Activated CD4-positive, alpha-beta T cell treated with anti-CD3 and anti-CD28 coated beads for 36 hours (primary cell): ENCODE measurements at regions of chr2 and their contacts with region 1.

Region 1: DNA sequence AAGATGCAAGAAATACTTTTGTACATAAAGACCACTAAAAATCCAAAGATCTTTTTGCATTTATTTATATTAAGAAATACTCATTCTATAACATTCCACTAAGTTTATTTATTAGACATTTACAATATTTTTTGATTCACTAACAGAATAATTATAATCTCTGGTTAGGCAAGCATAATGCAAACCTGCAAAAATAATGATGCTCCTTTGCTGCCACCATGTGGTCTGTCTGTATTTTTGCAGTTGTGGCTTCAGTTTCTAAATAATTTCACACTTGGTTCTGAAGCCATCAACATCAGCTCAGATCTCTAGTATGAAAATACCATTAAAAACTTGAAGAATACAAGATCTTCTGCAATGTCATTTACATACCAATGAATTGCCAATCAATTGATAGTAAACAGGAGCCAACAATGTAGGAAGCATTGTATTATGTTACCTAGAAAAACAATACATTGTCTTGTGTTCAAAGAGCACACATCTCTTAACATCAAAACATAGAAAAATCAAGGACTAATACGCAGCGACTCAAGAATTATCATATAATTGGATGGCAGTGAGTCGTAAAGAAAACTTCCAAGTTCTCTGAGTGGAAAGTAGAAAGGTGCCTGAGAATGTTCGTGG is 28.8 kb upstream of the WDR75 start:
- DNase-seq: peak; percentile 63
- ATAC-seq: no peak
- H3K4me3 Mint-ChIP-seq: no peak overlapping the region
- H3K27ac Mint-ChIP-seq: no peak overlapping the region
- H3K4me1 Mint-ChIP-seq: peaks cover 14% of the 10 kb centered on the region
- H3K27me3 Mint-ChIP-seq: no peaks in the 10 kb centered on the region

Region 2: DNA sequence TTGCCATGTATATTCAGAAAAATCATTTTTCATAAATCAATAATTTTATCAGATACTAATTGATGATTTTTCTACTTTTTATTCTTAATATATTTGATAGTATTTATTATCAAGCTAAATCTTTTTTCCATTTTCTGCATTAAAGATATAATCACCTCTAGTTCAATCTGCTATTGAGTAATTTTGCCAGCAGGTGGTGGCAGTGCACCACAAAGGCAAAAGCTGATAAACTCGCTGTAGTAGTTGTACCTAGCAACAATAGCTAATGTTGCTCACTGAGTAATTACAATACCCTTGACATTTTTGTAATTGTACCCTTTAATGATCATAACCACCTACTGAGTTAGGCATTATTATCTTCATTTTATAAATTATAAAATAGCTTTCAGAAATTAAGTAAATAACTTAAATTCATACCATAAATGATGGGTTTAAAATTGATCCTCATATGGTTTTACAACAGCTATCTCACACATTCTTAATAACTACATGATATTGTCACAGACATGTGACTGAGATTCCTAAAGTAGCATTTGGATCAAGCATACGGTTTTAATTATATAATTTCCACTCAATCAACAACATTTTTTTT is 1912.4 kb before region 1 on chr2:
- CTCF ChIA-PET with region 1: no interaction called
- POLR2A ChIA-PET with region 1: no interaction called
- intact Hi-C with region 1: loop called in 1 of 2 experiments (anchors 10 kb)
- DNase-seq: peak; percentile 73
- ATAC-seq: peak; percentile 44
- H3K4me3 Mint-ChIP-seq: no peak overlapping the region
- H3K27ac Mint-ChIP-seq: no peak overlapping the region
- H3K4me1 Mint-ChIP-seq: peaks cover 6% of the 10 kb centered on the region
- H3K27me3 Mint-ChIP-seq: peaks cover 2% of the 10 kb centered on the region

Region 3: GRCh38 chr2:188524519-188525113 is 887.8 kb before region 1 on chr2:
- CTCF ChIA-PET with region 1: interaction called, 20 read pairs
- POLR2A ChIA-PET with region 1: no interaction called
- intact Hi-C with region 1: loop called (anchors 1 kb)
- DNase-seq: peak; percentile 28
- ATAC-seq: no peak
- H3K4me3 Mint-ChIP-seq: no peak overlapping the region
- H3K27ac Mint-ChIP-seq: no peak overlapping the region
- H3K4me1 Mint-ChIP-seq: no peaks in the 10 kb centered on the region
- H3K27me3 Mint-ChIP-seq: peaks cover 3% of the 10 kb centered on the region

Region 4: DNA sequence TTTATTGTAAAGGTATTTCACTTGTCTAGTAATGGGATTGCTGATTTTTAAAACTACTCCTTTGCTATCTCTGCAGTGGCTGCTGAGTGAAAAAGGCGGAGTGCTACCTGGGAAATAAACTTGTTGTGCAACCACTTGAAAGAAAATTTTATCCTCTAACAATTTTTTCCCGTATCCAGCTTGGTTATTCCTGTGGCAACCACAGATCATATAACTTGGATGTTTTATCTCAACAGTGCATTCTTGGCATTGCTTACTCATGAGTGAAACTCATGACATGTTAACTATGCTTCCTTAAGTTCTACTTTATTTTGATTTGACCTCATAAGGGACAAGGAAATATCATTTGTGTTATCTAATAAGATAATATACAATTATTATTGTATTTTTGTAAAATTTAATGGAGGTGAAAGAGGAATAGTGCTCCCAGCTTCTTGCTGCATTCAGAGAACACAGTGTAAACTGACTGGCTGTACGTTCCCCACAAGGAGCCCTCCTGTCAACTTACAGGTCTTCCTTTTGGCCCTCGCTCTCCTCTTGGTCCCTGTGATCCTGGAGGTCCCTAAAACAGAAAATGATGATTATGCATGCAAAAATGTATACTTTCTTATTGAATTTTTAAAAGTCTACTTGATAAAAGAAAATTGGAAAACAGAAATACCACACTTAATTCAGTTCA is 315.5 kb before region 1 on chr2:
- CTCF ChIA-PET with region 1: interaction called, 51 read pairs
- POLR2A ChIA-PET with region 1: no interaction called
- intact Hi-C with region 1: loop called (anchors 1 kb)
- DNase-seq: no peak
- ATAC-seq: no peak
- H3K4me3 Mint-ChIP-seq: no peak overlapping the region
- H3K27ac Mint-ChIP-seq: no peak overlapping the region
- H3K4me1 Mint-ChIP-seq: no peaks in the 10 kb centered on the region
- H3K27me3 Mint-ChIP-seq: peaks cover 2% of the 10 kb centered on the region

Region 5: DNA sequence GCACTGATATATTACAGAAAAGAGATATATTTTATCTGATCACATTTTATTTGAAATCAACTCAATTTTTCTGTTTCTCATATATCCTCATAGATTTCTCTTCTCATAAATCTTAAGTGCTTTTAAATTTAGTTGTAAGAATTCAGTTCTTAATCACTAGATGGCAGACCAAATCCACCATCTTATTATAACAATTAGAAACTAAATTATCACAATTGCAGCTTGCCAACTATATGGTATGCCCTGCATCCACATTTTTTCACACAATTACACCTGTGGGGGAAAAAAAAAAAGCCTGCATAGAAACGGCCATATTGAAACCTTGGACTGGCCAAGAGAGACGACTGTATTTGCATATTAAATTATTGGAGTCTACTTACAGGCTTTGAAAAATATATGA is 297.3 kb before region 1 on chr2:
- CTCF ChIA-PET with region 1: interaction called, 14 read pairs
- POLR2A ChIA-PET with region 1: no interaction called
- intact Hi-C with region 1: no loop called
- DNase-seq: no peak
- ATAC-seq: no peak
- H3K4me3 Mint-ChIP-seq: no peak overlapping the region
- H3K27ac Mint-ChIP-seq: no peak overlapping the region
- H3K4me1 Mint-ChIP-seq: peaks cover 10% of the 10 kb centered on the region
- H3K27me3 Mint-ChIP-seq: peaks cover 2% of the 10 kb centered on the region

Region 6: GRCh38 chr2:189142893-189143759 is 269.3 kb before region 1 on chr2:
- CTCF ChIA-PET with region 1: interaction called, 23 read pairs
- POLR2A ChIA-PET with region 1: no interaction called
- intact Hi-C with region 1: loop called (anchors 1 kb)
- DNase-seq: peak; percentile 59
- ATAC-seq: peak; percentile 90
- H3K4me3 Mint-ChIP-seq: no peak overlapping the region
- H3K27ac Mint-ChIP-seq: no peak overlapping the region
- H3K4me1 Mint-ChIP-seq: no peaks in the 10 kb centered on the region
- H3K27me3 Mint-ChIP-seq: no peaks in the 10 kb centered on the region

Region 7: GRCh38 chr2:189287982-189288521 is 124.4 kb before region 1 on chr2:
- CTCF ChIA-PET with region 1: interaction called, 6 read pairs
- POLR2A ChIA-PET with region 1: no interaction called
- intact Hi-C with region 1: loop called (anchors 2 kb)
- DNase-seq: no peak
- ATAC-seq: peak; percentile 85
- H3K4me3 Mint-ChIP-seq: no peak overlapping the region
- H3K27ac Mint-ChIP-seq: peak overlapping the region; percentile 23
- H3K4me1 Mint-ChIP-seq: peaks cover 48% of the 10 kb centered on the region
- H3K27me3 Mint-ChIP-seq: no peaks in the 10 kb centered on the region